MCF 10A (cell line): ENCODE measurements at regions of chr1 and their contacts with region 1.

Region 1: GRCh38 chr1:162035241-162035640 is 11.6 kb upstream of the OLFML2B start:
- DNase-seq: peak; percentile 89
- H3K4me3 Mint-ChIP-seq: no peak overlapping the region
- H3K27ac Mint-ChIP-seq: no peak overlapping the region
- H3K4me1 Mint-ChIP-seq: peaks cover under 1% of the 10 kb centered on the region
- H3K27me3 Mint-ChIP-seq: peaks cover 11% of the 10 kb centered on the region
- CTCF ChIP-seq: no peak

Region 2: GRCh38 chr1:161766102-161766981 is 268.9 kb before region 1 on chr1 and contains the start of gene ATF6:
- CTCF ChIA-PET with region 1: interaction called, 39 read pairs
- POLR2A ChIA-PET with region 1: interaction called, 3 read pairs
- intact Hi-C with region 1: loop called (anchors 2 kb)
- DNase-seq: peak; percentile 98
- H3K4me3 Mint-ChIP-seq: peak within 1 kb of the TSS; percentile 100
- H3K27ac Mint-ChIP-seq: peak within 1 kb of the TSS; percentile 100
- H3K4me1 Mint-ChIP-seq: peaks cover 25% of the 10 kb centered on the region
- H3K27me3 Mint-ChIP-seq: no peaks in the 10 kb centered on the region
- CTCF ChIP-seq: no peak
- total RNA-seq, gene ATF6: 56.3 and 71.8 TPM in 2 replicates

Region 3: GRCh38 chr1:161801955-161802354 is 233.3 kb before region 1 on chr1:
- CTCF ChIA-PET with region 1: interaction called, 508 read pairs
- POLR2A ChIA-PET with region 1: interaction called, 4 read pairs
- intact Hi-C with region 1: no loop called
- DNase-seq: no peak
- H3K4me3 Mint-ChIP-seq: no peak overlapping the region
- H3K27ac Mint-ChIP-seq: no peak overlapping the region
- H3K4me1 Mint-ChIP-seq: no peaks in the 10 kb centered on the region
- H3K27me3 Mint-ChIP-seq: no peaks in the 10 kb centered on the region
- CTCF ChIP-seq: no peak

Region 4: GRCh38 chr1:161855260-161855659 is 180.0 kb before region 1 on chr1:
- CTCF ChIA-PET with region 1: interaction called, 23 read pairs
- POLR2A ChIA-PET with region 1: no interaction called
- intact Hi-C with region 1: no loop called
- DNase-seq: no peak
- H3K4me3 Mint-ChIP-seq: no peak overlapping the region
- H3K27ac Mint-ChIP-seq: no peak overlapping the region
- H3K4me1 Mint-ChIP-seq: peaks cover 2% of the 10 kb centered on the region
- H3K27me3 Mint-ChIP-seq: no peaks in the 10 kb centered on the region
- CTCF ChIP-seq: no peak

Region 5: DNA sequence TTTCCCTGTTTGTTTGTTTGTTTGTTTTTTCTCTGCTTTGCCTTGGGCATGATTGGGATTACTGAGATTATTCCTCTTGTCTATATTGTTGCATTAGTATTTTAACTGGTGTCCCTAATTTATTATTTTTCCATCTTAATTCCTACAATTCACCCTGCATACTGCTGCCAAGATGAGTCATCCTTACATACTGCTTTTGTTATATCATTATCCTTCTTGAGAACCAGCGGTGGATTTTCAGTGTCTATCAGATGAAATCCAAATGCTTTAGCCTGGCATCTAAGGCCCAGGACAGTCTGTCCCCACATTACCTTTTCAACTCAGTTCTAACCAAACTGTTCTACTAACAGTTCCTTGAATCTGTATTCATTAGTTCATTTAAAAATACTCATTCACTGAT is 113.3 kb before region 1 on chr1:
- CTCF ChIA-PET with region 1: interaction called, 10 read pairs
- POLR2A ChIA-PET with region 1: no interaction called
- intact Hi-C with region 1: no loop called
- DNase-seq: peak; percentile 33
- H3K4me3 Mint-ChIP-seq: no peak overlapping the region
- H3K27ac Mint-ChIP-seq: no peak overlapping the region
- H3K4me1 Mint-ChIP-seq: peaks cover 14% of the 10 kb centered on the region
- H3K27me3 Mint-ChIP-seq: no peaks in the 10 kb centered on the region
- CTCF ChIP-seq: no peak

Region 6: DNA sequence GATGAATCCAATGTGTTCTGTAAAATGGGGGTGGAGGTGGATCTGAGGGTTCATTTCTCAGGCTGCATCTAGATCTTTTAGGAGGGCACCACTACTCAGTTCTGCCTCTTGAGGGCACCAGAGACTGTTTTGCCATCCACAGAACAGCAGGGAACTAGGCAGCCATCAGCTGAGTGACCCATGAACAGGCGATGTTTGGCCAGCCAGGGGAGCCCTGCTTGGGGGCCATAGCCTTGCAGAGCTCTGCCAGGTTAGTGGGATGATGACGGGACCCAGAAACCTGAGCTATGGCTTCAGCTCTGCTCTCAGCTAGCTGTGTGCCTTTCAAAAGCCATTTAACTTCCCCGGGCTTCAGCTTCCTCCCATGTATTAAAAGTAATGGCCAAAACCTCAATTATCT is 20.8 kb after region 1 on chr1:
- CTCF ChIA-PET with region 1: interaction called, 128 read pairs
- POLR2A ChIA-PET with region 1: interaction called, 3 read pairs
- intact Hi-C with region 1: no loop called
- DNase-seq: peak; percentile 85
- H3K4me3 Mint-ChIP-seq: no peak overlapping the region
- H3K27ac Mint-ChIP-seq: no peak overlapping the region
- H3K4me1 Mint-ChIP-seq: peaks cover 14% of the 10 kb centered on the region
- H3K27me3 Mint-ChIP-seq: no peaks in the 10 kb centered on the region
- CTCF ChIP-seq: peak; percentile 99

Region 7: GRCh38 chr1:162113419-162113818 is 78.2 kb after region 1 on chr1:
- CTCF ChIA-PET with region 1: no interaction called
- POLR2A ChIA-PET with region 1: no interaction called
- intact Hi-C with region 1: no loop called
- DNase-seq: no peak
- H3K4me3 Mint-ChIP-seq: no peak overlapping the region
- H3K27ac Mint-ChIP-seq: no peak overlapping the region
- H3K4me1 Mint-ChIP-seq: no peaks in the 10 kb centered on the region
- H3K27me3 Mint-ChIP-seq: no peaks in the 10 kb centered on the region
- CTCF ChIP-seq: no peak

Region 8: GRCh38 chr1:162213281-162213912 is 178.2 kb after region 1 on chr1:
- CTCF ChIA-PET with region 1: no interaction called
- POLR2A ChIA-PET with region 1: no interaction called
- intact Hi-C with region 1: no loop called
- DNase-seq: peak; percentile 62
- H3K4me3 Mint-ChIP-seq: no peak overlapping the region
- H3K27ac Mint-ChIP-seq: no peak overlapping the region
- H3K4me1 Mint-ChIP-seq: peaks cover 24% of the 10 kb centered on the region
- H3K27me3 Mint-ChIP-seq: no peaks in the 10 kb centered on the region
- CTCF ChIP-seq: no peak